ENCODE measurements at regions of chr1 and their contacts with region 1.

Region 1: DNA sequence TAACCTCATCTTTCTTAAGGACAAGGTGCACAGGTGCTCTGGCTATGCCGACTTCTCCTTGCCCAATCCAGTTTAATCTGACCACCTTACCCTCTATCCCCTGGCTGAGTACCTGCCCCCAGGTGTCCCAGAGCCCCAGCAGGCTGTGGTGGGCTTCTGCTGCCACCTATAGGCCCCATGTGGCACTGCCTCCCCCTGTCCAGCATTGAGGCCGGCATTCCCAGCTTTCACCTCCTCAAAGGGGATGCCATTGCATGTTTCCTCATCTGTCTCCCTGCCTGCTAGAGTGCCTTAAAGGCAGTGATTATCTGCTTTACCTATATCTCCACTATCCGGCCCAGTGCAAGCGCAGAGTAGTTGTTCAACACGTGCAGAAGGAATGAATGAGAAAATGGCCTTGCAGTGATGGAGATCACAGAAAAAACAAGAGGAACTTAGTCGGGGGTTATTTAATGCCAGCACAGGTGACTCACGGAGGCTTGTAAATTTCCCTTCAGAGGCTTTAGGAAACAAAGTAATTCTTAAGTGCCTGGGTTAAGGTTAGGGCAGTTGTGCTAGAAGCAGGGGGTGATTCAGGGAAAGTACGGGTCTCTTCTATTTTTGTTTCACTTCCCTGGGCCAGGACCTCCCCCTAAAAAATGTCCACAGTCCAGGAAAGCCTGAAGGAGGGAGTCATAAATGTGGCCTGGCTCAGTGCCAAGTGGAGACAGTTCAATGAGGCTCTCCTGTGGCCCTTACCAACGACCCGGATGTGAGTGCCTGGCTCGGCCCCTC is 131.8 kb upstream of the NGF start:
- DNase-seq: peak; percentile 74
- H3K4me3 ChIP-seq: no peak overlapping the region
- H3K27ac ChIP-seq: peak overlapping the region; percentile 31
- H3K4me1 ChIP-seq: peaks cover 28% of the 10 kb centered on the region
- H3K27me3 ChIP-seq: no peaks in the 10 kb centered on the region
- CTCF ChIP-seq: peak; percentile 93 to 98

Region 2: GRCh38 chr1:115296981-115297380 is 172.9 kb before region 1 on chr1:
- CTCF ChIA-PET with region 1: no interaction called
- dilution Hi-C with region 1: no loop called
- in situ Hi-C with region 1: no loop called
- intact Hi-C with region 1: no loop called
- DNase-seq: peak; percentile 52
- H3K4me3 ChIP-seq: no peak overlapping the region
- H3K27ac ChIP-seq: no peak overlapping the region
- H3K4me1 ChIP-seq: peaks cover 41% of the 10 kb centered on the region
- H3K27me3 ChIP-seq: no peaks in the 10 kb centered on the region
- CTCF ChIP-seq: no peak

Region 3: DNA sequence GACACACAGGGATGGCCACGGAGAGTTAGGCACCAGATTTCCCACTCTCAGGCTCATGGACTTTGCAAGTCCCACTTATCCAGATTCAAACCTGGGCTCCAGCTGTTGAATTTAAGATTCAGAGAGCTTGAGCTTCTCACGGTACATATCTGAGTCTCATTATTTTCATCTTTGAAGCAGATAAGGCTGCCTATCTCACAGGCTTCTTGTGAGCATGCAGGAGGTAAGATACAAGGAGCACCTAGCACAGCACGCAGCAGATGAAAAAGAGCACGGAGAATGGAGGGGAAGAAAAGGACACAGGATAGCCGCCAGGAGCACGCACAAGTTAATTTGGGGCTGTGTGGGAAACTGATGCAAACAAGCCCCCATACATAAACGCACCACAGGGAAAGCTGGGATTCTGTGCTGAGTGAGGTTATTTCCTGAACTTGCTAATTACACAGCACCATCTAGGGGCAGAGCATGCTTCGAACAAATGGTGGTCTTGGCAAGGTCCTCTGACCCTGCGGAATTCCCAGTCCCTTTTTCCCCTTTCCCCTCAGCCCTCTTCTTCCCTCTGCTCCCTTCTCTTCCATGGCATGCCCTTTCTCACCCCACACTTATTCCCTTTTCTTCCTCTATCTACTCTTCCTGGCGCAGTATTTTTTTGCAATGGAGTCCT is 37.2 kb after region 1 on chr1:
- CTCF ChIA-PET with region 1: no interaction called
- dilution Hi-C with region 1: no loop called
- in situ Hi-C with region 1: no loop called
- intact Hi-C with region 1: loop called (anchors 2 kb)
- DNase-seq: no peak
- H3K4me3 ChIP-seq: no peak overlapping the region
- H3K27ac ChIP-seq: no peak overlapping the region
- H3K4me1 ChIP-seq: peaks cover 8% of the 10 kb centered on the region
- H3K27me3 ChIP-seq: no peaks in the 10 kb centered on the region
- CTCF ChIP-seq: peak; percentile 25 to 47

Measured in mammary epithelial cell (primary cell).